AG04450 (cell line): ENCODE measurements at regions of chr16 and their contacts with region 1.

Region 1: DNA sequence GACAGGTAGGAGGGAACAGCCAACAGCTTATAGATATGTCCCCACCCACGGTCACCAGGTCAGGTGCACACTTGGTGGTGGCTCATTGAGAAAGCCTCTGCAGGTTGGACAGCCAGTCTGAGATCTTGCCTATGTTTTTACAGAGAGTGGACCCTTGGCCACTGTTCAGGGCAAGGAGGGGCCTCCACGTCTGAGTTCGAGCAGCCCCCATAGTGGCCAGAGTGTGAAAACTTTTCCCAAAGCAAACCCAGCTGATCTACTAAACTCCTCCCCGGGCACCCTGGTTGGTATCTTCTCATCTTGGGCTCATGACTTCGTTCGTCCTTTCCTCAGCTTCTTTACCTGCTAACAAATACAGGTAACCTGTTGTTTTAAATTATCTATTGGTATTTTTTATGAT is 4.0 kb upstream of the ITGAM start:
- DNase-seq: no peak
- H3K4me3 ChIP-seq: no peak overlapping the region
- H3K27ac ChIP-seq: no peak overlapping the region
- H3K27me3 ChIP-seq: peaks cover 7% of the 10 kb centered on the region
- CTCF ChIP-seq: no peak

Region 2: DNA sequence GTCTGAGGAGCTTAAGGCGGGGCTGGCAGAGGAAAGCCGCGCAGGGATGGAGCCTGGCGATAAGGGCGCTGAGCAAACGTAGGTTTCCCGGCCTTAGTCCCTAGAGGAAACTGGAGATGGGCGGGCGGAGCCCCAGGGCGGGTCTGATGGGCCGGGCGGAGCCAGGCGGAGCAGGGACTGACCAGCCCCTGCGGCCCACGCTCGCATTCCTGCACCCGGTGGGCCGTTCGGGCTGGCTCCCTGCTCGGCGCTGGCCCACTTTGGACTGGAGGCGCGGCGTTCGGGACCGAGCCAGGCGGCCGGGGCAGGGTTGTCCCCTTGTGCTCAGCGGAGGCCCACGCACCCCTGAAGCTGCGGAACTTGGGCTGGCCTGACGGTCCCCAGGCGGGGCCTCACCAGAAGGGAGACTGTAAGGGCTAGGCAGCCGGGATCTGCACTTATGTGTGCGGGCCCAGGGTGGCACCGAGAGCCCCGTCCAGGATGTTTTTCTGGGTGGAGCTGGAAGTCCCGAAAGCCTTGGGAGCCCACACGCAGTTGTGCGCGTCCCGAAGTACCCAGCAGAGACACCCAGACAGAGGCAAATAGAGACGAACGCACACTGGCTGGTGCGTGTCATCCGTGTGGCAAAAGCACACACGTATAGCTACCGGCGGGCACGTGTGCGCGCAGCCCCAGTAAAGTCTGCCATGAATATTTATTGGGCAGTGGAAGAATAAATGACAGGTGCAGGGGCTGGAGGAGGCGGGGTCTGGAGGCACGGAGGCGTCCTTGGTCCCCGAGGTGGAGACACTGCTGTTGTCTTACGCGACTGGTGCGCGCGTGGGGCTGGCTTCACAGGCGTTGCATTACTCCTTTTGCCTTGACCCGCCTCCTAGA is 40.3 kb before region 1 on chr16:
- CTCF ChIA-PET with region 1: no interaction called
- POLR2A ChIA-PET with region 1: no interaction called
- DNase-seq: no peak
- H3K4me3 ChIP-seq: peak overlapping the region; percentile 59
- H3K27ac ChIP-seq: no peak overlapping the region
- H3K27me3 ChIP-seq: peaks cover 50% of the 10 kb centered on the region
- CTCF ChIP-seq: no peak

Region 3: GRCh38 chr16:31229501-31229900 is 26.3 kb before region 1 on chr16:
- CTCF ChIA-PET with region 1: interaction called, 11 read pairs
- POLR2A ChIA-PET with region 1: no interaction called
- DNase-seq: no peak
- H3K4me3 ChIP-seq: no peak overlapping the region
- H3K27ac ChIP-seq: no peak overlapping the region
- H3K27me3 ChIP-seq: no peaks in the 10 kb centered on the region
- CTCF ChIP-seq: no peak